ENCODE measurements at regions of chr6 and their contacts with region 1.

Region 1: DNA sequence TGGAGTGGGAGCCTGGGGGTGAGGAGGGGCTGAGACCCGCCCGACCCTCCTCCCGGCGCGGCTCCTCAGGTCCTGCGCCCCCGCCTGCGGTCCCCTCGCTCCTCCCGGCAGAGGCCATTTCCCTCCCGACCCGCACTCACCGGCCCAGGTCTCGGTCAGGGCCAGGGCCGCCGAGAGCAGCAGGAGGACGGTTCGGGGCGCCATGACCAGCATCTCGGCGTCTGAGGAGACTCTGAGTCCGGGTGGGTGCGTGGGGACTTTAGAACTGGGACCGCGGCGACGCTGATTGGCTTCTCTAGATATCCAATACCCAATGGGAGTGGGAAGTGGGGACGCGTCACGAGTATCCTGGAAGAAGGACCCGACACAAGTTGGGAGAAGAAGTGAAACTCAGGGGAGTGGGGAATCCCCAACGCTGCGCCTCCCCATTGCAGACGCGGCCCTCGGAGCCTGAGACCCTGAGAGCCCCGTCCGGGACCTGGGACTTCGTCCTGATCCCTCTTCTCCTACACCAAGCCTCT is at the start of gene HLA-B:
- DNase-seq: peak; percentile 77
- H3K4me3 ChIP-seq: peak within 1 kb of the TSS; percentile 55 to 58
- H3K27ac ChIP-seq: peak within 1 kb of the TSS; percentile 80 to 89
- H3K4me1 ChIP-seq: no peaks in the 10 kb centered on the region
- H3K27me3 ChIP-seq: no peaks in the 10 kb centered on the region
- CTCF ChIP-seq: no peak
- POLR2A ChIP-seq: no peak
- total RNA-seq, gene HLA-B: 846 to 899 TPM

Region 2: GRCh38 chr6:31271641-31272357 is 85.2 kb before region 1 on chr6 and contains the start of gene HLA-C:
- intact Hi-C with region 1: loop called (anchors 2 kb)
- DNase-seq: peak; percentile 96
- H3K4me3 ChIP-seq: peak within 1 kb of the TSS; percentile 68 to 76
- H3K27ac ChIP-seq: peak within 1 kb of the TSS; percentile 92 to 97
- H3K4me1 ChIP-seq: no peaks in the 10 kb centered on the region
- H3K27me3 ChIP-seq: no peaks in the 10 kb centered on the region
- CTCF ChIP-seq: no peak
- POLR2A ChIP-seq: peak; percentile 89
- total RNA-seq, gene HLA-C: 272 to 682 TPM

Region 3: DNA sequence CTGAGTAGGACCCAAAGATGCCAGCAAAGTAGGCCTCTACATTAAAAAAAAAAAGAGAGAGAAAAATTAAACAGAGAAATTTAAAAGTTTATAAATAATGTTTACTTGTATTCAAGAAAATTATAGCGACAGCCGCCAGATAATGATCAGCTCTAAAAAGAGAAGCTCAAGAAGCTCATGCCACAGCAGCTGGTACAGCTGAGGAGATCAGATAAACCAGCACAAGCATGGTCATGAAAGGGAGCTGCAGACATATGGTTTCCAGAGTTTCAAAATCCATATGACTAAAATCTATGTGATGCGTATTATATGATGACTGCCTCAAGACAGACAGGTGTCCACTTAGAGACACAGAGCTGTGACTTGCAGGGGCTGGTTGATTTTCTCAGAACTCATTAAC is 71.5 kb before region 1 on chr6:
- intact Hi-C with region 1: no loop called
- DNase-seq: no peak
- H3K4me3 ChIP-seq: no peak overlapping the region
- H3K27ac ChIP-seq: no peak overlapping the region
- H3K4me1 ChIP-seq: no peaks in the 10 kb centered on the region
- H3K27me3 ChIP-seq: no peaks in the 10 kb centered on the region
- CTCF ChIP-seq: no peak
- POLR2A ChIP-seq: no peak